ENCODE measurements at regions of chr10 and their contacts with region 1.

Region 1: GRCh38 chr10:103888113-103888841 is 29.7 kb downstream of the STN1 start:
- DNase-seq: peak; percentile 33
- ATAC-seq: peak; percentile 88
- H3K4me3 Mint-ChIP-seq: no peak overlapping the region
- H3K27ac Mint-ChIP-seq: peak overlapping the region; percentile 65
- H3K4me1 Mint-ChIP-seq: peaks cover 27% of the 10 kb centered on the region
- H3K27me3 Mint-ChIP-seq: no peaks in the 10 kb centered on the region
- CTCF ChIP-seq: peak; percentile 91

Region 2: GRCh38 chr10:103712570-103713498 is 175.4 kb before region 1 on chr10:
- CTCF ChIA-PET with region 1: interaction called, 79 read pairs
- POLR2A ChIA-PET with region 1: no interaction called
- intact Hi-C with region 1: no loop called
- DNase-seq: peak; percentile 92
- ATAC-seq: peak; percentile 97
- H3K4me3 Mint-ChIP-seq: no peak overlapping the region
- H3K27ac Mint-ChIP-seq: no peak overlapping the region
- H3K4me1 Mint-ChIP-seq: no peaks in the 10 kb centered on the region
- H3K27me3 Mint-ChIP-seq: no peaks in the 10 kb centered on the region
- CTCF ChIP-seq: peak; percentile 90

Region 3: GRCh38 chr10:103918053-103918846 is 30.0 kb after region 1 on chr10 and contains the start of gene STN1:
- CTCF ChIA-PET with region 1: interaction called, 11 read pairs
- POLR2A ChIA-PET with region 1: interaction called, 3 read pairs
- intact Hi-C with region 1: no loop called
- DNase-seq: peak; percentile 98
- ATAC-seq: peak; percentile 93
- H3K4me3 Mint-ChIP-seq: peak within 1 kb of the TSS; percentile 92
- H3K27ac Mint-ChIP-seq: peak within 1 kb of the TSS; percentile 97
- H3K4me1 Mint-ChIP-seq: peaks cover 28% of the 10 kb centered on the region
- H3K27me3 Mint-ChIP-seq: no peaks in the 10 kb centered on the region
- CTCF ChIP-seq: no peak
- total RNA-seq, gene STN1: 32.1 to 32.4 TPM

Region 4: DNA sequence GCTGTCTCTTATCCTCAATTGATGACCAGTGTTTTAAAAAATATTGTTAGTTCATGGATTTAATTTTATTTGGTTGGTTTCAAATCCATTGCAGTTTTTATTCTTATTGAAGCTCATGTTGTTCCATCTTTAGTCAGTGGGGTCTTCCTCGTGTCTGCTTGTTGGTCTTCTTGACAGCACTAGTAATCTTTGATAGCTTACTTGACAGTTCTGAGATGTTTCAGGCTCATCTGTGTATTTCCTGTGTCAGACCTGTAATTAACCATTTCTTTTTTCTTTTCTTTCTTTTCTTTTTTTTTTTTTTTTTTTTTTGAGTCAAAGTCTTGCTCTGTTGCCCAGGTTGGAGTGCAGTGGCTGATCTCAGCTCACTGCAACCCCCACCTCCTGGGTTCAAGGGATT is 106.9 kb after region 1 on chr10:
- CTCF ChIA-PET with region 1: interaction called, 15 read pairs
- POLR2A ChIA-PET with region 1: no interaction called
- intact Hi-C with region 1: no loop called
- DNase-seq: no peak
- ATAC-seq: no peak
- H3K4me3 Mint-ChIP-seq: no peak overlapping the region
- H3K27ac Mint-ChIP-seq: no peak overlapping the region
- H3K4me1 Mint-ChIP-seq: peaks cover 13% of the 10 kb centered on the region
- H3K27me3 Mint-ChIP-seq: no peaks in the 10 kb centered on the region
- CTCF ChIP-seq: no peak

Region 5: DNA sequence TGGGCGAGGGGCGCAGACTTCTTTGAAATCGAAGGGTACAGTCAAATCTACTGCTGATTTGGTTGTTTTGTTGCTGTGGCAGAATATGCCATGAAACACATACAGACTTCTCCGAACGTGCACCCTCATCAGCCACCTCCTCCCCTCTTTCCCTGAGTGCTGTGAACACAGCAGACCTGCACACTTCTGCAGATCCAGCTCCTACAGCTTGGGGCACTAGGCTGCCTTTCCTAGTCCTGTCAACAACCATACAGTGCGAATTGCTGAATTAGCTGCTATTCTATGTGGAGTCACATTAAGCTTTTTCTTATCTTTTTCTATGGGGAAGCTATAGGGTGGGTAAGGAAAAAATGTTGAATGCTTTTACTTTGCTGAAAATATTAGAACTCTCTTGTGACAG is 139.9 kb after region 1 on chr10:
- CTCF ChIA-PET with region 1: interaction called, 13 read pairs
- POLR2A ChIA-PET with region 1: no interaction called
- intact Hi-C with region 1: no loop called
- DNase-seq: peak; percentile 11
- ATAC-seq: peak; percentile 77
- H3K4me3 Mint-ChIP-seq: no peak overlapping the region
- H3K27ac Mint-ChIP-seq: no peak overlapping the region
- H3K4me1 Mint-ChIP-seq: peaks cover 10% of the 10 kb centered on the region
- H3K27me3 Mint-ChIP-seq: no peaks in the 10 kb centered on the region
- CTCF ChIP-seq: no peak

Region 6: DNA sequence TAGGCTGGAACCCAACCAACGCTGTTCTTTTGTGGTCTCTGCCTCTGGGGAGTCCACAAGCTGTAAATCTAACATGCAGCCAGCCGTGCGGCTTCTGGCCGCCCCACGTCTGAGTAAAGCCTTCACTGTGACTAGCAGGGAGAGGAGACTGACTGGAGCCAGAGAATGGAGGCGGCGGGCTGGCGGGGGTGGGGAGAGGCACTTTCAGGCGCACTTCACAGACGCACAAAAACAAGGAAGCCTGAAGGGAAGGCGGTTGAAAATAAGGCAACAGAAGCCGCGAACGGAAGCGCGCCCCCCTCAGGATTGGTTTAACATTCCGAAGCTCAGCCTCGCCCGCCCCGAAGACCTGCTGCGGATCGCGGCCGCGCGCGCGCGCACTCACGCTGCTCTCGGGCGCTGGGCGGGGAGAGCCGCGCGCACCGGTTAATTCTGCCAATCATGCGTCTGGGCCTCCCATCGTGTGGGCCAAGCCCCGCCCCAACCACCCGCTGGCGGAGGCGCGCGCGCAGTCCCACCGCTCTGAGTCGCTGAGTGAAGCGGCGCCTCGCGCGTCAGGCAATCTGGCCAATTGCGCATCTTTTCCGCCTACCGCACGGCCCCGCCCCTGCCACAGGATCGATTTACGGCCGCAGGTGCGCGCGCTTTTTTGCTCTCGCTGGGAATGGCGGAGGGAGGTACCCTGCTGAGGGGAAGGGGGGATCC is 233.4 kb after region 1 on chr10 and contains the start of gene SFR1:
- CTCF ChIA-PET with region 1: interaction called, 45 read pairs
- POLR2A ChIA-PET with region 1: interaction called, 6 read pairs
- intact Hi-C with region 1: loop called (anchors 2 kb)
- DNase-seq: peak; percentile 99
- ATAC-seq: peak; percentile 95
- H3K4me3 Mint-ChIP-seq: peak within 1 kb of the TSS; percentile 85
- H3K27ac Mint-ChIP-seq: peak within 1 kb of the TSS; percentile 98
- H3K4me1 Mint-ChIP-seq: peaks cover 25% of the 10 kb centered on the region
- H3K27me3 Mint-ChIP-seq: no peaks in the 10 kb centered on the region
- CTCF ChIP-seq: peak; percentile 37
- total RNA-seq, gene SFR1: 16.8 to 17.9 TPM

Region 7: GRCh38 chr10:104274762-104275721 is 386.8 kb after region 1 on chr10:
- CTCF ChIA-PET with region 1: interaction called, 10 read pairs
- POLR2A ChIA-PET with region 1: no interaction called
- intact Hi-C with region 1: no loop called
- DNase-seq: peak; percentile 59
- ATAC-seq: peak; percentile 93
- H3K4me3 Mint-ChIP-seq: peak overlapping the region; percentile 62
- H3K27ac Mint-ChIP-seq: no peak overlapping the region
- H3K4me1 Mint-ChIP-seq: peaks cover 8% of the 10 kb centered on the region
- H3K27me3 Mint-ChIP-seq: peaks cover 19% of the 10 kb centered on the region
- CTCF ChIP-seq: peak; percentile 90